ENCODE measurements at regions of chr6 and their contacts with region 1.

Region 1: DNA sequence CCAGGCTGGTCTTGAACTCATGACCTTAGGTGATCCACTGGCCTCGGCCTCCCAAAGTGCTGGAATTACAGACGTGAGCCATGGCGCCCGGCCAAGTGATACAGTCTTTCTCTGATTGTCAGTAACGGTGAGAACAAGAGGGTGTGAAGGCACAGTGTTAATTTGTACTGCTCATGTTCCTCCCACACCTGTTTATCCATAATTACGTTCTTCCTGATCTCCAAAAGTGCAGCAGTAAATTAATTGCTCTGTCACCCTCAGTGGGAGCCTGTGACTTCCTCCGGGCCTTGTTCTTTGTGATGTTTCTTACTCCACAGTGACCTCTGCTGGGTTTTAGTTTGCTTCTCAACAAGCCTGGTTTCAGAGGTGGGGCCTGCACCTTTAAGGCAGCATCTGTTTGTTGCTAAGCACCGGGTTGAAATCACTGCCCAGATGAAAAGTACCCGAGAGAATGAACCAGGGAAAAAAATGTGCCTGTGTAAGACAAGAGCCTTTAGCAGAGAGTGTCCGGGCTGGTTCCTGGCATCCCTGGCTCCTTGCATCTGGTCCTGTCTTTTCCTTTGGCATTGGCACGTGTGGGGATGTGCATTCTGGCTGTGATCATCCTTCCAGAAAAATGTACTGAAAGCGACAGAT is 89.1 kb upstream of the CLDN20 start:
- DNase-seq: peak; percentile 85
- ATAC-seq: peak; percentile 86
- H3K4me3 ChIP-seq: no peak overlapping the region
- H3K27ac ChIP-seq: no peak overlapping the region
- H3K4me1 ChIP-seq: peaks cover 19 to 37% of the 10 kb centered on the region in 2 experiments
- H3K27me3 ChIP-seq: no peaks in the 10 kb centered on the region
- CTCF ChIP-seq: peak; percentile 65 to 94 (median 72)
- POLR2A ChIP-seq: no peak
- RAD21 ChIP-seq: peak; percentile 96

Region 2: DNA sequence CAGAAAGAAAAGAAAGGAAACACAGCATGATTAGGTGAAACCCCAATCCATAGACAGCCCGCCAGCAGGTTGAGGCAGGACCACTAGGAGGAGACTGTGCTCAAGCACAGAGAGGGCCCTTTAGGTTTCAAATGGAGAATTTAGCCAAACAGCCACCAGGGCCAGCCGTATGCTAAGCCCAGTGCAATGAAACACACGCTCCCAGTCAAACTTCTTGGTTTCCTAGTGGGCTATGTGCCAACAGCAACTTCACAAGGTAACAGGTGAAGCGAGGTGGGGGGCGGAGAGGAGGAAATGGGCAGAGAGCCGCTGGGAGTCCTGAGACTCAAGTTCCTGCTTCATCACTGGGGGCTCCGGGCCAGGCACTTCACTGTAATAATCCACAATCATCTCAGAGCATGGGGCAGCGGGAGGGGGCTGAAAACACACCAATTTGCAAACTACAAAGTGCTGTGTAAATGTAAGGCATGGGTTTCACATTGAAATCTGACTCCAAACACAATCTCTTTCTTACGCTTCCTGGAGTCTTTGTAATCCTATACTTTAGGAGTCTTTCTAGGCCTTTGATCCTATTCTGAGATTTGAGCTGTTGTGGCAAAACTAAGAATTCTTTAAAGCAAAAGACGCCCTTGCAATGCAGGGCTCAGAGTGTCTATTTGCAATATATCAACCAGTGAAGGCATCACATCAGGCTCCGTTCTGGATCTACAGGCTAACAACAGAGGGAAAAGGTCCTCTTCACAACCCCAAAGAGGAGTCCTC is 1018.4 kb before region 1 on chr6:
- CTCF ChIA-PET with region 1: no interaction called
- POLR2A ChIA-PET with region 1: no interaction called
- RAD21 ChIA-PET with region 1: no interaction called
- intact Hi-C with region 1: loop called (anchors 5 kb)
- DNase-seq: peak; percentile 52
- ATAC-seq: peak; percentile 99
- H3K4me3 ChIP-seq: no peak overlapping the region
- H3K27ac ChIP-seq: no peak overlapping the region
- H3K4me1 ChIP-seq: no peaks in the 10 kb centered on the region
- H3K27me3 ChIP-seq: no peaks in the 10 kb centered on the region
- CTCF ChIP-seq: peak; percentile 80 to 88 (median 82)
- POLR2A ChIP-seq: no peak
- RAD21 ChIP-seq: peak; percentile 83

Region 3: GRCh38 chr6:154928325-154928922 is 246.3 kb before region 1 on chr6:
- CTCF ChIA-PET with region 1: interaction called, 11 read pairs
- POLR2A ChIA-PET with region 1: interaction called, 3 read pairs
- RAD21 ChIA-PET with region 1: interaction called in 1 of 2 experiments, 3 read pairs
- intact Hi-C with region 1: loop called (anchors 1 kb)
- DNase-seq: peak; percentile 49
- ATAC-seq: peak; percentile 58
- H3K4me3 ChIP-seq: no peak overlapping the region
- H3K27ac ChIP-seq: no peak overlapping the region
- H3K4me1 ChIP-seq: peaks cover 21 to 23% of the 10 kb centered on the region in 2 experiments
- H3K27me3 ChIP-seq: no peaks in the 10 kb centered on the region
- CTCF ChIP-seq: peak; percentile 71 to 91 (median 89)
- POLR2A ChIP-seq: no peak
- RAD21 ChIP-seq: peak; percentile 97

Region 4: DNA sequence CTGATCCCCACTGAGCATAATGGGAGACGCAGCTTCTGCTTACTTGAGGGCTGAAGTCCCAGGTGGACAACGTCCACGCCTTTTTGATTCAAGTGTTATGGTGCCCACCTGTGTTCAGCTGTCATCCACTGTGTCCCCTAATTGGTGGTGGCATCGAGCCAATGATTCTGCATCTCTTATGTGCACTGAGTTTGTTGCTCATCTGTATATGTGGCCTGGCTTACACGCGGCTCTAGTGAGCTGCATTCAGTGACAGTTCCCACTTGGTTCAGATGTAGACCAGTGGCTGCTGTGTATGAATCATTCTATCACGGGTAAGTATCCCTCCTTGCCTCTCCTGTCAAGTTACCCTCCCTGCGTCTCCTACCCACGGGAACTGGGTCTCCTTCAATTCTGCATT is 42.1 kb before region 1 on chr6:
- CTCF ChIA-PET with region 1: no interaction called
- POLR2A ChIA-PET with region 1: no interaction called
- RAD21 ChIA-PET with region 1: no interaction called
- intact Hi-C with region 1: no loop called
- DNase-seq: no peak
- ATAC-seq: no peak
- H3K4me3 ChIP-seq: no peak overlapping the region
- H3K27ac ChIP-seq: no peak overlapping the region
- H3K4me1 ChIP-seq: peaks cover 2 to 6% of the 10 kb centered on the region in 2 experiments; a peak in 3 of 4 replicates
- H3K27me3 ChIP-seq: peaks cover 4% of the 10 kb centered on the region; the same call in 1 of the 2 replicates
- CTCF ChIP-seq: no peak
- POLR2A ChIP-seq: no peak
- RAD21 ChIP-seq: no peak

Region 5: DNA sequence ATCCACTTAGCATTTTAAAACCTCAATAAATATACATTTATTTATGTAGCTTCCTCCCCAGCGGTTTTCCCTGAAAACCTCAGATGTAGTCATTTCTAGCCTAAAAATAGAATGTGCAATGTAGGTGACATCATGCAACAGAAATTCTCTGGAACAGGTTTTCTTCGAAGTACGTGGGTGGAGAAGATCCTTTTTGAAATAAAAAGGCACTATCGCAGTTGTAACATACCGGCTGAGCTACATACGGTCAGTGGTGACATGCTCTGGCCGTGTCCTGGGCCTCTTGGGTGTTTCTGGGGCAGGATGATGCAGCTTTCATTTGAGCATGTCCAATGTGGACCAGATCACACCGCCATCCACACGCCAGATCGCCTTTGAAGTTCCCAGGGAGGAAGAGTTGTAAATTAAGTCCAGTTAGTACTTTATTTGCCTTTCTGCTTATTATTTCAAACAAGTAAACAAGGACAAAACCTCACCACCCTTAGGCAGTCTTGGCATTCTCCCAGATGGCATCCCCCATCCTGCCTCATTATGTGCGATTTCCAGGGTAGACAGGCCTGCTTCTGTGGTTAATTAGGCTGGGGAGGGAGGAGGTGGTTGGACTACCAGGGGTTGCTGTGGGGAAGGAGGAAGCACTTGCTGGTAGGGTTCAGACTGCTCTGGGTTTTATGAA is 20.4 kb before region 1 on chr6:
- CTCF ChIA-PET with region 1: no interaction called
- POLR2A ChIA-PET with region 1: no interaction called
- RAD21 ChIA-PET with region 1: no interaction called
- intact Hi-C with region 1: no loop called
- DNase-seq: no peak
- ATAC-seq: peak; percentile 54; the same call in 1 of the 2 replicates
- H3K4me3 ChIP-seq: peak overlapping the region in 1 of 2 experiments; percentile 1; a peak in 1 of 4 replicates
- H3K27ac ChIP-seq: peak overlapping the region; percentile 12; the same call in 1 of the 2 replicates
- H3K4me1 ChIP-seq: peaks cover 45 to 66% of the 10 kb centered on the region in 2 experiments
- H3K27me3 ChIP-seq: no peaks in the 10 kb centered on the region
- CTCF ChIP-seq: no peak
- POLR2A ChIP-seq: no peak
- RAD21 ChIP-seq: no peak

Region 6: GRCh38 chr6:155273431-155273830 is 98.7 kb after region 1 on chr6:
- CTCF ChIA-PET with region 1: interaction called, 3 read pairs
- POLR2A ChIA-PET with region 1: no interaction called
- RAD21 ChIA-PET with region 1: no interaction called
- intact Hi-C with region 1: loop called (anchors 1 kb)
- DNase-seq: no peak
- ATAC-seq: peak; percentile 38; the same call in 1 of the 2 replicates
- H3K4me3 ChIP-seq: no peak overlapping the region
- H3K27ac ChIP-seq: no peak overlapping the region
- H3K4me1 ChIP-seq: peaks cover 5 to 13% of the 10 kb centered on the region in 2 experiments
- H3K27me3 ChIP-seq: no peaks in the 10 kb centered on the region
- CTCF ChIP-seq: no peak
- POLR2A ChIP-seq: no peak
- RAD21 ChIP-seq: no peak

Region 7: DNA sequence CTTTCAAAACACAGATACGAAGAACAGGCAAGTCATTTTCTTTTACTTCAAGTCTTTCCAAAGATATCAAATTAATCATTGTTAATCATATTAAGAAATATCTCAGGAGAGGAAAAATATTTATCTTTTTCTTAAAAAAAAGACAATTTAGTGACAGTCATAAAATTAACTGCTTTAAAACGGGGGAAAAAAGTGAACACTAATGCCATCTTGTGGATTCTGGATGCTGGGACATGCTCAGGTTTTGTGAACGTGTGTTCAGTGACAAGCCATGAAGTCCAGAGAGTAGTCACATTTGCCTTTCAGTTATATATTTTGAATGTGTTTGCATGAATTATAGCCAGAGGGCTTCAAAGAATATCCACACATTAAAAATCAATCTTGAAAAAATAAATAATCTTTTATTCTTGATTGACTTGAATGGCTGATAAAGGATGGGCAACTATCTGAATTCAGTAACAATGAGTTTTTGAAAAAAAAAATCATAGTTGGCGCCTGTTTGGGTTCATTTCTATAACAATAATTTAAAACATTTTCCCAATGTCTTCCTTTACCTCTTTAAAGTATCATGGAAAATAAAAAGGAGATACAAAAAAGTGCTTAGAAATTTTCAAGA is 355.6 kb after region 1 on chr6:
- CTCF ChIA-PET with region 1: no interaction called
- POLR2A ChIA-PET with region 1: no interaction called
- RAD21 ChIA-PET with region 1: no interaction called
- intact Hi-C with region 1: loop called (anchors 2 kb)
- DNase-seq: peak; percentile 27
- ATAC-seq: peak; percentile 79
- H3K4me3 ChIP-seq: no peak overlapping the region
- H3K27ac ChIP-seq: no peak overlapping the region
- H3K4me1 ChIP-seq: peaks cover 0 to 3% of the 10 kb centered on the region in 2 experiments; a peak in 2 of 4 replicates
- H3K27me3 ChIP-seq: no peaks in the 10 kb centered on the region
- CTCF ChIP-seq: peak; percentile 63 to 70 (median 69); a peak in 5 of 6 replicates
- POLR2A ChIP-seq: no peak
- RAD21 ChIP-seq: peak; percentile 81

Measured in HCT116 (cell line).